H1 (cell line): ENCODE measurements at regions of chr1 and their contacts with region 1.

Region 1: DNA sequence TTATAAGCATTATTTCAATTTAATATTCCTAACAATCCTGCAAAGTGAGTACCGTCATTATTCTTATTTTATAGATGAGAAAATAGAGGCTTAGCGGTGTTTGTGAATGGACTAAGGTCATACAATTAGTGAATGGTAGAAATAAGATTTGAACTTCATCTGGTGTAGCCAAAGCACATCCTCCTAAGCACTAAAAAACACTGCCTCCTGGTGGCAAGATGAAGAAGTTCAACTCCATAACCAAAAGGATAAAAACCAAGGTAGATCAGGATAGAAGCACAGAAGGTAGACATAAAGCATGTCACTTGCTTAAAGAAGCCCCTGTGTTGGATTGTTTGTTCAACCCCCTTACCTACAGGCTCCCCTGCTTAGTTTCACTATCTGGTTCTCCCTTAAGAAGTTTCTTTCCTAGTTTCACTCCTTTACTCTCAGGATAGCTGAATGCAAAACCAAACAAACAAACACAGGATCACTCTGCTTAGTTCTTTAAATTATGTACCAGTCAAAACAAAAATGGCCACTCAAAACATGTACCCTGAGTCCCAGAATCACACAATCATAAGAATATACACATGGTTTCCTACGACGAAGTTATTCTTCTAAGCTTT is 12.7 kb upstream of the AIM2 start:
- DNase-seq: no peak
- H3K4me3 ChIP-seq: no peak overlapping the region
- H3K27ac ChIP-seq: no peak overlapping the region
- H3K4me1 ChIP-seq: no peaks in the 10 kb centered on the region
- H3K27me3 ChIP-seq: no peaks in the 10 kb centered on the region
- CTCF ChIP-seq: peak in 2 of 3 experiments; percentile 46 to 74; a peak in 3 of 4 replicates
- EP300 ChIP-seq: no peak
- POLR2A ChIP-seq: no peak
- RAD21 ChIP-seq: peak; percentile 46 to 49; a peak in 3 of 4 replicates

Region 2: GRCh38 chr1:158793604-158794003 is 295.7 kb before region 1 on chr1:
- CTCF ChIA-PET with region 1: interaction called, 10 read pairs
- POLR2A ChIA-PET with region 1: no interaction called
- DNase-seq: peak in 1 of 2 experiments; percentile 58
- H3K4me3 ChIP-seq: no peak overlapping the region
- H3K27ac ChIP-seq: no peak overlapping the region
- H3K4me1 ChIP-seq: no peaks in the 10 kb centered on the region
- H3K27me3 ChIP-seq: no peaks in the 10 kb centered on the region
- CTCF ChIP-seq: peak in 2 of 3 experiments; percentile 66 to 71; a peak in 3 of 4 replicates
- EP300 ChIP-seq: no peak
- POLR2A ChIP-seq: no peak
- RAD21 ChIP-seq: peak; percentile 70 to 78

Region 3: DNA sequence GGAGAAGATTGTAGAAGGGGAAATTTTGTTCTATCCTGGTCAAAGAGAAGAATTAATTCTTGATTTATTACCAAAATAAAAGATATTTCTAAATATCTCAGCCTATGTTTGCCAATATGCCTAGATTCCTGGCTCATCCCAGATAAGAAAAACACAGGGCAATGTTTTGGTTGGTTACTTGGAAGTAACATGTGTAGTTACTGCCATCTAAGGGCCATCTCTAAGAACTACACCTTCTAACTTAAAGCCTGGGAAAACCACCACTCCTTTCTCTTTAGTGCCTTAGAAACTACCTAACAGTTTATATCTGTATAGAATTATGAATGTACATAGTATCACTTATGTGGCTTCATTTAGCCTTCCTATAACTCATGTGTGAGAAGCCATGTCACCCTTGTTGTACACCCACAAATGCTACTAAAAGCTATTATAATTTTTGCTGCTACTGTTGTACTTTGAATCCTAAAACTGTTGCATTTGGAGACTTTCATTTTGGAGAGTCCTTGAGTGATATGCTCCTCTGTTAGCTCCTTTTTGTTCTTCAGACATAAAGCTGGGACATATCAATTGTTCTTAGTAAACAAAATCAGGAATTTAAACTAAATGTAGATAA is 17.2 kb before region 1 on chr1:
- CTCF ChIA-PET with region 1: interaction called, 23 read pairs
- POLR2A ChIA-PET with region 1: no interaction called
- DNase-seq: no peak
- H3K4me3 ChIP-seq: no peak overlapping the region
- H3K27ac ChIP-seq: no peak overlapping the region
- H3K4me1 ChIP-seq: peaks cover 0 to 6% (median 0%) of the 10 kb centered on the region in 4 experiments; a peak in 1 of 7 replicates
- H3K27me3 ChIP-seq: no peaks in the 10 kb centered on the region
- CTCF ChIP-seq: peak in 2 of 3 experiments; percentile 57 to 69; a peak in 2 of 4 replicates
- EP300 ChIP-seq: no peak
- POLR2A ChIP-seq: no peak
- RAD21 ChIP-seq: peak; percentile 84 to 91

Region 4: DNA sequence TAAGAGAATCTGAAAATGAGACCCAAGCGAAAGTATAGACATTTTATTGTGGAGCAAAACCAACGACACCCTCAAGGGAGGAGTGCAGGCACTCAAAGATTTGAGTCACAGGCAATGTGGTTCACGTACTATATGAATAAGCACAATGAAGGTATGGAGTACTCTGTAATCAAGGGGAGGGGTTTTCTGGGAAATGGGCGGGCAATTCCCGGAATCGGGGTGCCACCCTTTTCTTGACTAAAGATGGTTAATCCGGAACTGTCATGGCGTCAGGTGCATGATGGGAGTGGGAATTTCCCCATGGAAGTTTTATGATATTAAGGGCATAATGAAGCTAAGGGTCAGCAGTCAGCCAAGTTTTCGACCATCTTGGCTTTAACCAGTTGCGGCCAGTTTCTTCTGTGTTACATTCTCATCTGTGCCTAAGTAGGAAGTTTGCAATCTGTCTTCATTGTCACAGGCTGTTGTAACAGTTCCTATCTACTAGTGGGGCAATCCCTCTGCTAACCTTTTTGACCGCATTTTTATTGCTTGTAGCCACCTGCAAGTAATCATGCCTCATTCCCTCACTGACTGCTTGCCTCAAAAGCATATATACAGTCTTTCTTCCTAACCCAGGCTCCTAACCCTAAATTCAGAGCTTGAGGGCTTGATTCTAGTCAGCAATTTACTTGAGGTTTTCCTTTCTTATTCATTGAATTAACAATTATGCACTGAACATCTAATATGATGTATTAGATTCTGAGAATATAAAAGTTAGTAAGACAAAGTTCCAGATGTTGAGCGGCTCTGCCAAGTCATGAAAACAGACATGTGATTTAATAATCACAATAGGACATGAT is 11.9 kb before region 1 on chr1:
- CTCF ChIA-PET with region 1: interaction called, 23 read pairs
- POLR2A ChIA-PET with region 1: no interaction called
- DNase-seq: no peak
- H3K4me3 ChIP-seq: no peak overlapping the region
- H3K27ac ChIP-seq: no peak overlapping the region
- H3K4me1 ChIP-seq: no peaks in the 10 kb centered on the region
- H3K27me3 ChIP-seq: no peaks in the 10 kb centered on the region; a peak in 1 of 7 replicates
- CTCF ChIP-seq: no peak
- EP300 ChIP-seq: no peak
- POLR2A ChIP-seq: no peak
- RAD21 ChIP-seq: no peak

Region 5: GRCh38 chr1:159171688-159172501 is 82.6 kb after region 1 on chr1:
- CTCF ChIA-PET with region 1: no interaction called
- POLR2A ChIA-PET with region 1: no interaction called
- DNase-seq: peak in 1 of 2 experiments; percentile 80
- H3K4me3 ChIP-seq: peak overlapping the region; percentile 87 to 99 (median 96)
- H3K27ac ChIP-seq: no peak overlapping the region
- H3K4me1 ChIP-seq: peaks cover 0 to 11% (median 3%) of the 10 kb centered on the region in 4 experiments; a peak in 6 of 7 replicates
- H3K27me3 ChIP-seq: peaks cover 0 to 3% (median 0%) of the 10 kb centered on the region in 4 experiments; a peak in 2 of 7 replicates
- CTCF ChIP-seq: no peak
- EP300 ChIP-seq: no peak
- POLR2A ChIP-seq: no peak
- RAD21 ChIP-seq: no peak